Activated T-helper 2 cell treated with anti-CD3 and anti-CD28 coated beads, Interferon-gamma antibody, Interleukin-2, Interleukin-4, amounts not matched to agents 10 μg/mL and 5 μg/mL and 100 μg/mL, durations not matched to agents 14 hours and 24 hours and 36 hours (primary cell): ENCODE measurements at regions of chr3 and their contacts with region 1.

Region 1: GRCh38 chr3:40317061-40317855 is 7.8 kb downstream of the EIF1B start:
- DNase-seq: no peak
- H3K4me3 Mint-ChIP-seq: no peak overlapping the region
- H3K27ac Mint-ChIP-seq: no peak overlapping the region
- H3K4me1 Mint-ChIP-seq: peaks cover 3% of the 10 kb centered on the region
- H3K27me3 Mint-ChIP-seq: no peaks in the 10 kb centered on the region

Region 2: DNA sequence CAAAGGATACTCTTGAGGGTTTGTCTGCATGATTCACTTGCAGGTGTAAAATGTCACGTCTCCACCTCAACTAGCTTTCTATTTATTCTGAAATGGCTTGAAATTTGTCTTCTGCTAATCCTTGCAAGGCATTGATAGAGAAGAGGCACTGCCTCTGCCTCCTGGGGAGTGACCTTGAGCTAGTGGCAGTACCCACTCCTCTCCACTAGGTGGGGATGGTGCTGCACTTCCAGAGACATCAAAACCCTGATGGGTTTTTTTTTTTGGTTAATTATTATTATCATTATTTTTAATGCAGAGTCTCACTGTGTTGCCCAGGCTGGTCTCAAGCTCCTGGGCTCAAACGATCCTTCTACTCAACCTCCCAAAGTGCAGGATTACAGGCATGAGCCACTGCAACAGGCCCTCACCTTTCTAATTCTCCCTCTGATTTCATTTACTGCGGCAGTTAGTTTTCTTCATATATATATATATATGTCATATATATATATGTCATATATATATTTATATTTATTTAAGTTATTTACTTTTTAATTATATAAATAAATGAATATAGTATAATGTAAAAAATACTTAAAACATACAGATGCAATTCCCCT is 125.3 kb before region 1 on chr3:
- intact Hi-C with region 1: loop called (anchors 1 kb)
- DNase-seq: peak; percentile 24
- H3K4me3 Mint-ChIP-seq: no peak overlapping the region
- H3K27ac Mint-ChIP-seq: no peak overlapping the region
- H3K4me1 Mint-ChIP-seq: no peaks in the 10 kb centered on the region
- H3K27me3 Mint-ChIP-seq: peaks cover 3% of the 10 kb centered on the region